Activated naive CD4-positive, alpha-beta T cell treated with anti-CD3 and anti-CD28 coated beads for 36 hours (primary cell): ENCODE measurements at regions of chr7 and their contacts with region 1.

Region 1: GRCh38 chr7:93055543-93056107 is 62.2 kb downstream of the SAMD9 start:
- DNase-seq: no peak
- H3K4me3 Mint-ChIP-seq: no peak overlapping the region
- H3K27ac Mint-ChIP-seq: no peak overlapping the region
- H3K4me1 Mint-ChIP-seq: peaks cover 11% of the 10 kb centered on the region
- H3K27me3 Mint-ChIP-seq: peaks cover 7% of the 10 kb centered on the region

Region 2: DNA sequence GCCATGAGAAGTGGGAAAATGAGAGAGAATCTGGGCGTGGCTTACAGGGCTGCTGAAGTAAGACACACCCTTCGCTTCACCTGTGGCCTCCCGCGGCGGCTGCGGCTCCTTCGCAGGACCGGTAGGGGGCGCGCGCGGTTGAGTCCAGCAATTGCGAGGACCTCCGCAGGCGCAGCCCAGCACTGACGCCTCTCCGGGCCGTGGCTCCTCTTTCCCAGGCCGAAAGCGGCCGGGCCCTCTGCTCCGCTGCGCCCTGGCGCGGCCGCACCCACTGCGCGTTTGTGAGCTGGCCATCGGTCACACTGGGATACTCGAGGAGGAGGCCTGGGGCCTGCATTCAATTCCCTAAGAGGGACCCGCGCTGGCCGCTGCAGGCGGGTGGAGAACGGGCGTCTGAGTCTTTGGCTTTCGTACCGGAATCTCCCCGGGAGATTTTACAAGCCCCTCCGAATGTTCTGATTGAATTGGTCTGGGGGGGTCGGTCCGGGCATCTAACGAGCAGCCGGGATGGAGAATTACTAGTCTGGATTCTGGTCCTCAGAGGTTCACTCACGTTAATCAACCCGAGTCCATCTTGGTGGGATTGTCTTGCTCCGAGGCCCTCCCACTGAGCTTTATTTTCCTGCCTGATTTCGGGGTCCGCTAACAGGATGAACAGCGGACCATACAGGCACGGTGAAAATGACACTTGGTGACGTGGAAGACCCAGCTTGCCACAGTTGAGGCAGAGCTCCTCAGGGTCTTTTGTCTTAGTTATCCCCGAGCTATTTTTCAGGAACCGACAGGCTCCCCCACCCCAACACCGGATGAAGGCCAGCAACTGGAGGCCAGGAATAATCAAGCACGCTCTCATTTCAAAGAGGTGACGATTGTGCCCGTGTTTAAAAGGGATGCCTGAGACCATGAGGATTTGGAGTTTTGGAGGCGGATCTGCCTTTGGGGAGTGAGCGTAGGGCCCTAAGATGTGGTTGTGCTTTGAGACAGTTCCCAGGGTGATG is 876.4 kb before region 1 on chr7 and contains the start of gene LRRD1:
- CTCF ChIA-PET with region 1: no interaction called
- intact Hi-C with region 1: loop called (anchors 10 kb)
- DNase-seq: peak; percentile 94
- H3K4me3 Mint-ChIP-seq: peak within 1 kb of the TSS; percentile 72
- H3K27ac Mint-ChIP-seq: no peak within 1 kb of the TSS
- H3K4me1 Mint-ChIP-seq: peaks cover 10% of the 10 kb centered on the region
- H3K27me3 Mint-ChIP-seq: peaks cover 3% of the 10 kb centered on the region
- total RNA-seq, gene LRRD1: not detected

Region 3: GRCh38 chr7:92425321-92425947 is 630.2 kb before region 1 on chr7:
- CTCF ChIA-PET with region 1: no interaction called
- intact Hi-C with region 1: loop called (anchors 1 kb)
- DNase-seq: peak; percentile 20
- H3K4me3 Mint-ChIP-seq: peak overlapping the region; percentile 19
- H3K27ac Mint-ChIP-seq: no peak overlapping the region
- H3K4me1 Mint-ChIP-seq: peaks cover 11% of the 10 kb centered on the region
- H3K27me3 Mint-ChIP-seq: peaks cover 14% of the 10 kb centered on the region

Region 4: GRCh38 chr7:92461027-92462003 is 594.3 kb before region 1 on chr7:
- CTCF ChIA-PET with region 1: no interaction called
- intact Hi-C with region 1: loop called (anchors 1 kb)
- DNase-seq: peak; percentile 53
- H3K4me3 Mint-ChIP-seq: no peak overlapping the region
- H3K27ac Mint-ChIP-seq: no peak overlapping the region
- H3K4me1 Mint-ChIP-seq: no peaks in the 10 kb centered on the region
- H3K27me3 Mint-ChIP-seq: no peaks in the 10 kb centered on the region

Region 5: DNA sequence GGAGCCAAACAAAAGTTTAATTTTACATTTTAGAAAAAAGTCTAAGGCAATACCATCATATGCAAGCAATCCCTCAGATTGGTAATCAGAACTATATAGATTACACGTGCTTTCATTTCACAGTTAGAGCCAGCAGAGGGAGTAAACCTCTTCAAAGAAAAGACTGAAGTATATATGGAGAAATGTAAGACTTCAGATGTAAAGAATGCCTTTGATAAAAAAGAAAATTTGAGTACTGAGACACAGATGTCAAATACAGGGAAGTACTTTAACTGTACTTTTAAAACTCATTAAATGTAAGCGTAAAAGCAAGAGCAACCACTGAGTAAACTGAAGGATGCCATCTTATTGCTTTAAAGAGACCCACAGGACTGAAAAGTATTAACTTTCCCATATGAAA is 364.0 kb before region 1 on chr7:
- CTCF ChIA-PET with region 1: no interaction called
- intact Hi-C with region 1: loop called (anchors 1 kb)
- DNase-seq: peak; percentile 46
- H3K4me3 Mint-ChIP-seq: no peak overlapping the region
- H3K27ac Mint-ChIP-seq: peak overlapping the region; percentile 87
- H3K4me1 Mint-ChIP-seq: peaks cover 70% of the 10 kb centered on the region
- H3K27me3 Mint-ChIP-seq: no peaks in the 10 kb centered on the region

Region 6: GRCh38 chr7:92880212-92881090 is 175.2 kb before region 1 on chr7:
- CTCF ChIA-PET with region 1: no interaction called
- intact Hi-C with region 1: loop called (anchors 1 kb)
- DNase-seq: peak; percentile 43
- H3K4me3 Mint-ChIP-seq: no peak overlapping the region
- H3K27ac Mint-ChIP-seq: no peak overlapping the region
- H3K4me1 Mint-ChIP-seq: peaks cover 34% of the 10 kb centered on the region
- H3K27me3 Mint-ChIP-seq: peaks cover 9% of the 10 kb centered on the region

Region 7: GRCh38 chr7:93036807-93037206 is 18.8 kb before region 1 on chr7:
- CTCF ChIA-PET with region 1: no interaction called
- intact Hi-C with region 1: loop called (anchors 1 kb)
- DNase-seq: peak; percentile 74
- H3K4me3 Mint-ChIP-seq: no peak overlapping the region
- H3K27ac Mint-ChIP-seq: peak overlapping the region; percentile 59
- H3K4me1 Mint-ChIP-seq: peaks cover 22% of the 10 kb centered on the region
- H3K27me3 Mint-ChIP-seq: no peaks in the 10 kb centered on the region